Caco-2 (cell line): ENCODE measurements at regions of chr20 and their contacts with region 1.

Region 1: DNA sequence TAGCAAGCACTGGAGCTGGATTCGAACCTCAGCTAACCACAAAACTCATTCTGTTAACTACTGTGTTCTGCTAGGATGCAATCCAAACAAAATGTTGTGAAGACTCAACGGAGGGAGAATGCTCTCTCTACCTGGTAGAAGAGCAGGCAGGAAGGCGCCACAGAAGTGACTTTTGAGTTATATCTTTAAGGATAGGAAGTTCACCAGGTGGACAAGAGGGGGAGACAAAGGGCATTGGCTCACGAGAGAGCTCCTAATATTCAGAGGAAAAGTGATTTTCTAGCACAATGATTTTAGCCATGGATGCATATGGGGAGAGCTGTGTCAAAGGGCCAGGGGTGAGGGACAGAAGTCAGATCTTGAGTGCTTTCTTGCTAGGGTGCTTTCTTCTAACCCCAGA is 108.4 kb upstream of the MAFB start:
- DNase-seq: peak in 1 of 2 experiments; percentile 71
- H3K4me3 ChIP-seq: no peak overlapping the region
- H3K4me3 Mint-ChIP-seq: no peak overlapping the region
- H3K27ac Mint-ChIP-seq: no peak overlapping the region
- H3K4me1 ChIP-seq: no peaks in the 10 kb centered on the region
- H3K4me1 Mint-ChIP-seq: no peaks in the 10 kb centered on the region
- H3K27me3 ChIP-seq: peaks cover 2% of the 10 kb centered on the region
- H3K27me3 Mint-ChIP-seq: peaks cover 23% of the 10 kb centered on the region
- CTCF ChIP-seq: peak; percentile 92 to 97

Region 2: GRCh38 chr20:40778894-40779496 is 18.4 kb before region 1 on chr20:
- CTCF ChIA-PET with region 1: interaction called, 12 read pairs
- POLR2A ChIA-PET with region 1: no interaction called
- intact Hi-C with region 1: no loop called
- DNase-seq: no peak
- H3K4me3 ChIP-seq: no peak overlapping the region
- H3K4me3 Mint-ChIP-seq: no peak overlapping the region
- H3K27ac Mint-ChIP-seq: no peak overlapping the region
- H3K4me1 ChIP-seq: no peaks in the 10 kb centered on the region
- H3K4me1 Mint-ChIP-seq: no peaks in the 10 kb centered on the region
- H3K27me3 ChIP-seq: peaks cover 4% of the 10 kb centered on the region
- H3K27me3 Mint-ChIP-seq: peaks cover 14% of the 10 kb centered on the region
- CTCF ChIP-seq: no peak

Region 3: GRCh38 chr20:40892649-40893048 is 95.2 kb after region 1 on chr20:
- CTCF ChIA-PET with region 1: no interaction called
- POLR2A ChIA-PET with region 1: no interaction called
- intact Hi-C with region 1: no loop called
- DNase-seq: peak; percentile 62 to 64
- H3K4me3 ChIP-seq: no peak overlapping the region
- H3K4me3 Mint-ChIP-seq: no peak overlapping the region
- H3K27ac Mint-ChIP-seq: no peak overlapping the region
- H3K4me1 ChIP-seq: no peaks in the 10 kb centered on the region
- H3K4me1 Mint-ChIP-seq: peaks cover 2% of the 10 kb centered on the region
- H3K27me3 ChIP-seq: no peaks in the 10 kb centered on the region
- H3K27me3 Mint-ChIP-seq: peaks cover 8% of the 10 kb centered on the region
- CTCF ChIP-seq: peak; percentile 58 to 67

Region 4: DNA sequence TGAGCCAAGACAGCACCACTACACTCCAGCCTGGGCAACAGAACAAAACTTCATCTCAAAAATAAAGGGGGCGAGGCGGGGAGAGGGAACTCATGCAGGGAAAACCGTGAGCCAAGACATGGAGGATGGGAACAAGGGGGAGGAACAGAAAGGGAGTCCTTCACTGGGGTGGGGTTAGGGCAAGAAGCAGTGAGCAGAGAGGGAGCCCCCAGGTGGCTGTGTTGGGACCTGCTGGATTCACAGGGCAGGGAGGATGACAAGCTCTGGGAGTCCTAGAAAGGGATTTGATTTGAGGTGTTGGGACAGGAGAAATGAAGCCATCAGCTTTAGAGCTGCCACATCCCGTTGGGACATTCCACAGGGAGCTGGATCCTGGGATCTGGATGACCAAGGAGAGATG is 140.6 kb after region 1 on chr20:
- CTCF ChIA-PET with region 1: interaction called, 13 read pairs
- POLR2A ChIA-PET with region 1: no interaction called
- intact Hi-C with region 1: no loop called
- DNase-seq: peak in 1 of 2 experiments; percentile 46
- H3K4me3 ChIP-seq: no peak overlapping the region
- H3K4me3 Mint-ChIP-seq: no peak overlapping the region
- H3K27ac Mint-ChIP-seq: no peak overlapping the region
- H3K4me1 ChIP-seq: no peaks in the 10 kb centered on the region; the same call in 1 of the 2 replicates
- H3K4me1 Mint-ChIP-seq: no peaks in the 10 kb centered on the region
- H3K27me3 ChIP-seq: no peaks in the 10 kb centered on the region
- H3K27me3 Mint-ChIP-seq: peaks cover 17% of the 10 kb centered on the region
- CTCF ChIP-seq: peak; percentile 44 to 52